ENCODE measurements at regions of chr21 and their contacts with region 1.

Region 1: DNA sequence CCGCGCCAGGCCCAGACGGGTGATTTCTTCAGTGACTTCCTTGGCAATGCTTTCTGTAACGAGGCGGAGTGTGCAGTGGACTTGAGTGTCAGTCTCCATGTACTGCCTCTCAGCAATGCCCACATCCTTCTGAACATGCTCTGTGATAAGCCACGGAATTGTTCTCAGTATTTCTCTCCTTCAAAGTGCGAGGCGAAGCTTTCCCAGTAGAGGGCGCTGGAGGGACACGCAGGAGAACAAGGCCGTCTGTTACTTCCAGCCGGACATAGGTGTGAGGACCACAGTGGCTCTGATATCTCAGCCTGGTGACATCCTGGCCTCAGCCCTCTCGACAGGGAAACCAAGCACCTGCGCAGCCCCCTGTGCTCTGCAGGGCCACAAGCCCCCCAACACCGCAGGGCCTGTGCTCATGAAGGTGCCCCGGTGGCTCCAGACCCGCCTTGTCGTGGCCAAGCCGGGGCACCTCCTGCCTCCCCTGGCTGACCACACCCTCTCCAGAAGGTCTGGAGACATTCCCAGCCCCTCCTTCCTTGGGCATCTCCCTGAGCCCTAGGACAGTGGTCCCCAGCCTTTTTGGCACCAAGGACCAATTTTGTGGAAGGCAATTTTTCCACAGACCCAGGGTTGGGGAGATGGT is 46.1 kb upstream of the BACE2 start:
- DNase-seq: peak; percentile 54 to 83 (median 63)
- ATAC-seq: peak; percentile 99
- H3K4me3 ChIP-seq: no peak overlapping the region
- H3K27ac ChIP-seq: no peak overlapping the region
- H3K4me1 ChIP-seq: no peaks in the 10 kb centered on the region
- H3K27me3 ChIP-seq: peaks cover 3 to 5% of the 10 kb centered on the region in 2 experiments; a peak in 3 of 5 replicates
- CTCF ChIP-seq: peak; percentile 87 to 94 (median 92)
- EP300 ChIP-seq: no peak
- POLR2A ChIP-seq: no peak
- RAD21 ChIP-seq: peak; percentile 67 to 77

Region 2: DNA sequence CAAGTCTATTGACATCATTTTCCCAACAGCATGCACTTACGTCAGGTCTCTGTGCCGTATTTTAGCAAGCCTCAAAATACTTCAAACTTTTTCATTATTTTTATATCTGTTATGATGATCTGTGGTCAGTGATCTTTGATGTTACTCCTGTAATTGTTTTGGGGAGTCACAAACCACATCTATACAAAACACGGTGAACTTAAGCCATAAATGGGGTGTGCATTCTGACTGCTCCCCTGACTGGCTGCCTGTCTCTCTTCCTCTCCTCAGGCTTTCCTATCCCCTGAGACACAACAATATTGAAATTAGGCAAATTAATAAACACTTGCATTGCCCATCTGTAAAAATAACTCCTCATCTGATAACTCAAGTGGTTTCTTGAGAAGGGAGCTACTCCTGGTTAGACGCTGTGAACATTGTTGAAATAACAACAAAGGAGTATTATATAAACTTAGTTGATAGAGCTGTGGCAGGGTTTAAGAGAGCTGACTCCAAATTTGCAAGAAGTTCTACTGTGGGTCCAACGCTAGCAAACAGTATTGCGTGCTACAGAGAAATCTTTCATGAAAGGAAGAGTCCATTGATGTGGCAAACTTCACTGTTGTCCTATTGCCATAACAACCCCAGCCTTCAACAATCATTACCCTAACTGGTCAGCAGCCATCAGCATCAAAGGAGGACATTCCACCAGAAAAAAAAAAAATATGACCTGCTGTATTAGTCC is 169.2 kb before region 1 on chr21:
- CTCF ChIA-PET with region 1: no interaction called
- POLR2A ChIA-PET with region 1: no interaction called
- in situ Hi-C with region 1: no loop called
- intact Hi-C with region 1: no loop called
- DNase-seq: no peak
- ATAC-seq: no peak
- H3K4me3 ChIP-seq: no peak overlapping the region
- H3K27ac ChIP-seq: no peak overlapping the region
- H3K4me1 ChIP-seq: no peaks in the 10 kb centered on the region
- H3K27me3 ChIP-seq: no peaks in the 10 kb centered on the region
- CTCF ChIP-seq: no peak
- EP300 ChIP-seq: no peak
- POLR2A ChIP-seq: no peak
- RAD21 ChIP-seq: no peak

Region 3: DNA sequence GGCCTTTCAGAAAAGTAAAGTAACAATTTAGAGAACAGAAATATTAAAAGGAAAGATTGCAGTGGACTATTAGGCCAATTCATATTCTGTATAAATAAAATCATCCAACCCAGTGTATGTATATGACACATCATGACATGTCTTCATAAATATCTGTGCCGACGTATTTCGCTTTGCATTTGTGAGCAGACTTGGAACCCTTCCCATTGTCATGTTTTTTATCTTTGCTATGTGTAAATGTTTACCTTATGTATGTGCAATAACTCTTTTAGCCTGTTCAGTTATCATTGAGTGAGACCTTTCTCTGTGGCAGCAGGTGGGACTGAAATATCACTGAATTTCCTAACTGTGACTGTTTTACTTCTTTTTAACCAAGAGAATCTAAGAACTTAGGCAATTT is 136.7 kb after region 1 on chr21:
- CTCF ChIA-PET with region 1: no interaction called
- POLR2A ChIA-PET with region 1: no interaction called
- in situ Hi-C with region 1: no loop called
- intact Hi-C with region 1: no loop called
- DNase-seq: no peak
- ATAC-seq: no peak
- H3K4me3 ChIP-seq: no peak overlapping the region
- H3K27ac ChIP-seq: no peak overlapping the region
- H3K4me1 ChIP-seq: no peaks in the 10 kb centered on the region
- H3K27me3 ChIP-seq: no peaks in the 10 kb centered on the region; a peak in 2 of 5 replicates
- CTCF ChIP-seq: no peak
- EP300 ChIP-seq: no peak
- POLR2A ChIP-seq: no peak
- RAD21 ChIP-seq: no peak

Region 4: GRCh38 chr21:41289426-41289825 is 167.5 kb after region 1 on chr21:
- CTCF ChIA-PET with region 1: no interaction called
- POLR2A ChIA-PET with region 1: no interaction called
- in situ Hi-C with region 1: no loop called
- intact Hi-C with region 1: no loop called
- DNase-seq: peak in 1 of 4 experiments; percentile 5
- ATAC-seq: peak; percentile 74
- H3K4me3 ChIP-seq: no peak overlapping the region
- H3K27ac ChIP-seq: no peak overlapping the region
- H3K4me1 ChIP-seq: no peaks in the 10 kb centered on the region
- H3K27me3 ChIP-seq: no peaks in the 10 kb centered on the region; a peak in 1 of 5 replicates
- CTCF ChIP-seq: no peak
- EP300 ChIP-seq: no peak
- POLR2A ChIP-seq: no peak
- RAD21 ChIP-seq: no peak

Region 5: DNA sequence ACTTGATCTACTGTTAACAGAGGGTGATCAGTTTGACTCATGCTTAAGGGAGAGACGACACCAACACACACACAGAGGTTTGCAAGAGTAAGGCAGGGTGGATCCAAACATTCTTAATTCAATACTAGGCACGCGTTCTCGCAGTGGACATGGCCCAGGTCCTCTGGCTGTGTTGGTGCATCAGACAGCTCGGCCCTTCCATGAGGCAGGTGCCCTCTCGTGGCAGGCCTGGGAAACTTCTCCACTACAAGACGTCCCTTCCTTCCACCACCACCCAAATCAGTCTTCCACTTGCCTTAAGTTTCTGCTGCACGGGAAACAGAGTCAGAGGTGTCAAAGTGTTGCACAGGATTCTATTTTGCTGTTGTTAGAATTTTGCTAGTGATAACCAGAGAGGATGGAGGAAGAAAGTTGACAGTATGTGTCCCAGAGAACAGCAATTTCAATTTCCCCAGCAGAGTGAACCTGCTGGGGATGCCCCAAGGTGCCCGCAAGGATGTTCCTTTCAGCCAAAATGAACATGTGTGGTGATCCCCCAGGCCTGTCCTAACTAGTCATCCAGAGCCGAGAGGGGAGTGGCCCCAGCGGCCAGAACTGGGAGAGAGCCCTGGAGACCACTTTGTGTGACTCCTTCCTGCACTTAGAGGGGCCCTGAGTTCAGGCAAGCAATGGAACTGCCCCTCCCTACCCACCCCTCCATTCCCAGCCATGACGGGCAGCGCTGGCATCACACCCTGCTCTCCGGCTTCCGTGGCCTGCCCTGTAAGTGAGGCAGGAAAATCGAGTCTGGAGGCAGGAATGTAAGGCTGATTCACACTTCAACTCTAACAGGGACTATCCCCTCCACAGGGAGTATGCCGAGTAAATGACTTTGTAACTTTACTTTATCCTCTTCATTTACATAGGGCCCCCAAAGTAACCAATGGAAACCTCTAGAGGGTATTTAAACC is 338.9 kb after region 1 on chr21:
- CTCF ChIA-PET with region 1: interaction called, 4 read pairs
- POLR2A ChIA-PET with region 1: no interaction called
- in situ Hi-C with region 1: no loop called
- intact Hi-C with region 1: loop called (anchors 10 kb)
- DNase-seq: peak; percentile 56 to 60 (median 57)
- ATAC-seq: peak; percentile 95
- H3K4me3 ChIP-seq: no peak overlapping the region
- H3K27ac ChIP-seq: no peak overlapping the region
- H3K4me1 ChIP-seq: peaks cover 0 to 3% of the 10 kb centered on the region in 2 experiments; a peak in 1 of 5 replicates
- H3K27me3 ChIP-seq: peaks cover 8 to 23% of the 10 kb centered on the region in 2 experiments; a peak in 3 of 5 replicates
- CTCF ChIP-seq: peak; percentile 61 to 76 (median 69)
- EP300 ChIP-seq: no peak
- POLR2A ChIP-seq: no peak
- RAD21 ChIP-seq: peak; percentile 46 to 67

Region 6: GRCh38 chr21:42021366-42022090 is 899.6 kb after region 1 on chr21:
- CTCF ChIA-PET with region 1: no interaction called
- POLR2A ChIA-PET with region 1: no interaction called
- in situ Hi-C with region 1: no loop called
- intact Hi-C with region 1: no loop called
- DNase-seq: no peak
- ATAC-seq: no peak
- H3K4me3 ChIP-seq: no peak overlapping the region
- H3K27ac ChIP-seq: no peak overlapping the region
- H3K4me1 ChIP-seq: peaks cover 0 to 6% of the 10 kb centered on the region in 2 experiments; a peak in 1 of 5 replicates
- H3K27me3 ChIP-seq: peaks cover 78 to 82% of the 10 kb centered on the region in 2 experiments
- CTCF ChIP-seq: no peak
- EP300 ChIP-seq: no peak
- POLR2A ChIP-seq: no peak
- RAD21 ChIP-seq: no peak

Measured in K562 (cell line).